Endothelial cell of umbilical vein (primary cell): ENCODE measurements at regions of chr12 and their contacts with region 1.

Region 1: GRCh38 chr12:92779902-92780301 is 77.1 kb downstream of the PLEKHG7 start:
- DNase-seq: no peak
- H3K4me3 ChIP-seq: no peak overlapping the region
- H3K27ac ChIP-seq: no peak overlapping the region
- H3K4me1 ChIP-seq: peaks cover 4% of the 10 kb centered on the region
- H3K27me3 ChIP-seq: no peaks in the 10 kb centered on the region
- CTCF ChIP-seq: no peak
- POLR2A ChIP-seq: no peak

Region 2: GRCh38 chr12:92304371-92305055 is 475.4 kb before region 1 on chr12:
- CTCF ChIA-PET with region 1: no interaction called
- POLR2A ChIA-PET with region 1: no interaction called
- dilution Hi-C with region 1: no loop called
- intact Hi-C with region 1: no loop called
- DNase-seq: peak; percentile 54
- H3K4me3 ChIP-seq: no peak overlapping the region
- H3K27ac ChIP-seq: no peak overlapping the region
- H3K4me1 ChIP-seq: no peaks in the 10 kb centered on the region
- H3K27me3 ChIP-seq: no peaks in the 10 kb centered on the region
- CTCF ChIP-seq: no peak
- POLR2A ChIP-seq: no peak

Region 3: GRCh38 chr12:92769124-92769901 is 10.6 kb before region 1 on chr12:
- CTCF ChIA-PET with region 1: interaction called, 4 read pairs
- POLR2A ChIA-PET with region 1: no interaction called
- dilution Hi-C with region 1: no loop called
- intact Hi-C with region 1: loop called (anchors 1 kb)
- DNase-seq: peak; percentile 91
- H3K4me3 ChIP-seq: no peak overlapping the region
- H3K27ac ChIP-seq: peak overlapping the region; percentile 61
- H3K4me1 ChIP-seq: peaks cover 28% of the 10 kb centered on the region
- H3K27me3 ChIP-seq: no peaks in the 10 kb centered on the region
- CTCF ChIP-seq: no peak
- POLR2A ChIP-seq: peak; percentile 43